Body of pancreas (tissue), 4 donors: ENCODE measurements at regions of chr22 and their contacts with region 1.

Region 1: DNA sequence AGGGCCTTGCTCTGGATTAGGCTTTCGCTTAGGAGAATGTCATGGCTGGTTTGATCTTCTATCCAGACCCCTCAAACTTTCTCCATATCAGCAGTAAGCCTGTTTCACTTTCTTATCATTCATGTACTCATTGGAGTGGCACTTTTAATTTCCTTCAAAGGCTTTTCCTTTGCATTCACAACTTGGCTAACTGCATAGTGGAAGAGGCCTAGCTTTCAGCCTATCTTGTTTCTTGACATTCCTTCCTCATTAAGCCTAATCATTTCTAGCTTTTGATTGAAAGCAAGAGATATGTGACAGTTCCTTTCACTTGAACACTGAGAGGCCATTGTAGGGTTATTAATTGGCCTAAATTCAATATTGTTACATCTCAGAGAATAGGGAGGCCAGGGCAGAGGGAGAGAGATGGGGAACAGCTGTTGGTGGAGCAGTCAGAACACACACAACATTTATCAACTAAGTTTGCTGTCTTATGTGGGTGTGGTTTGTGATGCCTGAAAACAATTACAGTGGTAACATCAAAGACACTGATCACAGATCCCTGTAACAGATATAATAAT is 37.7 kb upstream of the APOBEC3A start:
- DNase-seq: no peak
- ATAC-seq: no peak
- H3K4me3 ChIP-seq: no peak overlapping the region
- H3K27ac ChIP-seq: no peak overlapping the region
- H3K4me1 ChIP-seq: peaks cover 43% of the 10 kb centered on the region
- H3K27me3 ChIP-seq: no peaks in the 10 kb centered on the region
- CTCF ChIP-seq: no peak
- POLR2A ChIP-seq: no peak

Region 2: GRCh38 chr22:38879108-38879729 is 40.5 kb before region 1 on chr22:
- intact Hi-C with region 1: loop called (anchors 5 kb)
- DNase-seq: no peak
- ATAC-seq: no peak
- H3K4me3 ChIP-seq: no peak overlapping the region
- H3K27ac ChIP-seq: no peak overlapping the region
- H3K4me1 ChIP-seq: peaks cover 25% of the 10 kb centered on the region
- H3K27me3 ChIP-seq: no peaks in the 10 kb centered on the region
- CTCF ChIP-seq: no peak
- POLR2A ChIP-seq: no peak